ENCODE measurements at regions of chr4 and their contacts with region 1.

Region 1: DNA sequence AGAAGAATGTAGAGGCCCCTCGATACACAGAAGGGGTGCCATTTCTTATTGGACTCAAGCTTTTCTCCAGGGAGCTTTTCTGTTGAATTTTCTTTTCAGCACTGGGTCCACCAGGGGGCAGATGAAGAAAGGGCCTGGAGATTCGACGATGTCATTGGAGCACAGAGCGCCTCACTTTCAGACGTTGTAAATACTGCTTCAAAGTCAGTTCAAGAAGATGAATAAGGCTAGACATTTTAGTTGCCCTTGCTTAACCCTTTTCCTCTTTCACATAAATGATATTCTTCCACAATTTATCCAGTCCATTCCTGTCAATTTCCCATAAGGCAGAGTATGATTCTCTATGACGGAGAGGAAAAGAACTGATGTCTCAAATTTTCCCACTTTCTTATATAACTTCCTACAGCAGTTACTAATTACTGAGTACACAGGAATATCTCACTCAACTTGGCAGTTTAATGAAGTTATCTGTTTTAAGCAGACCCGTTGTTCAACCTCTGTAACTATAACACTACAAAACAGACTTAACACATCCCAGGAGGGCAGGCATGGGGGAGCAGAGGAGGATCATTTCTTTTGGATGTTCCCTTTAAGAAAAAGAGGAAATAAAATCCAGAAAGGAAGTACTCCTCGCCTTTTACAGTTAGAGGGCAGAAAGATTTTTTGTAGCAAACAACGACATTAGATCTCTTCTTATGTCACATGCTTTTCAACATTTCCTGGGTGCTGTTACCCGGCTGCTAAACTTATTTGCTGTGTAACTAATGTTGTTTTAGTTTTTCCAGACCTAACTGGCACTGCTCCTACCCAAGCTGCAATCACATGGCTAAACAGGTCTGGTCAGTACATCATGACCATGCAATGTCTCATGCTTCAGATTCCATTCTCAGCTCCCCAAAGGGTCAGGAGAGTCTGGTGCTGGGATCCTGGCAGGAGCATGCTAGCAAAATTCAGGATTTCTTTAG is 12.2 kb upstream of the CENPU start:
- DNase-seq: peak; percentile 40 to 92 (median 82)

Region 2: DNA sequence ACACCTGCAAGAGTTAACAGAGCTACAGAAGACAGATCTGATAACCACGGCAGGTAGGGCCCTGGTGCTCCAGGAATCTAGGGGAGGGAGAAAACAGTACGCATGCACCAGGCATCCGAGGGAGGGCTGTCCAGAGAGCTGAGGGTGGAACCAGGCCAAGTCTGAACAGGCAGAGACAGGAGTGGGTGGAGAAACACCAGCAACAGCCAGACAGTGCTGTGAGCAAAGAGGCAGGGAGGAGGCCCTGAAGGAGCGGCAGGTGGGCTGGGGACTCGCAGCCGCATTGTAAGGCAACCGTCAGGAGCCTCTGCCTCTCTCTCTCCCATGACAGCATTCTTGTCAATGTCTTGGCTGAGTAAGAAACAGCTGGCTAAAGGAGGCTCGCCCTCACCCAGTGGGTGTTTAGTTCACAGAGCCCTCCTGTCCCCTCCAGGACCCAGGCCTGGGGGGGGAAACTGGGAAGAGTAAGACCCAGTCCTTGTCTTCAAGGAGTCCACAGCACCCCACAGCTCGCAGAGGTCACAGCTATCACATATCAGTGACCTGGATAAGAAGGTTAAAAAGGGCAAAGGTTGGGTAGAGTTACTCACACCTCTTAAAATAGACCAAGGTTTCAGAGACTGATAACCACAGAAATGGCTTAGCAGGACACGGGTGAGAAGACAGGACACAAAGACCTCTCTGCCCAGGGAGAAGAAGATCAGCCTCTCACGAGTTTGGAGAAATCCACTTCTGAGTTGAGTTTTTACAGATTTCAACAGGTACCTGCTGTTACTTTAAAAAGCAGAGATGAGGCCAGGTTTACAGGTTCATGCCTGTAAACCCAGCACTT is 69.1 kb after region 1 on chr4:
- intact Hi-C with region 1: loop called (anchors 5 kb)
- DNase-seq: peak; percentile 45 to 85 (median 66)

Region 3: GRCh38 chr4:184988611-184989010 is 242.5 kb after region 1 on chr4:
- intact Hi-C with region 1: loop called (anchors 5 kb)
- DNase-seq: no peak

Region 4: DNA sequence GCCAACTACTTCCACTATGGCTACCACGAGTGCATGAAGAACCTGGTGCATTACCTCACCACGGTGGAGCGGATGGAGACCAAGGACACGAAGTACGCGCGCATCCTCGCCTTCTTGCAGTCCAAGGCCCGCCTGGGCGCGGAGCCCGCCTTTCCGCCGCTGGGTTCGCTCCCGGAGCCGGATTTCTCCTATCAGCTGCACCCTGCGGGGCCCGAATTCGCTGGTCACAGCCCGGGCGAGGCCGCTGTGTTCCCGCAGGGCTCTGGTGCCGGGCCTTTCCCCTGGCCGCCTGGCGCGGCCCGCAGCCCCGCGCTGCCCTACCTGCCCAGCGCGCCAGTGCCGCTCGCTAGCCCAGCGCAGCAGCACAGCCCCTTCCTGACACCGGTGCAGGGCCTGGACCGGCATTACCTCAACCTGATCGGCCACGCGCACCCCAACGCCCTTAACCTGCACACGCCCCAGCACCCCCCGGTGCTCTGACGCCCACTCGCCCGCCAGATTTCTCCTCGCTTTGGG is 274.2 kb after region 1 on chr4:
- intact Hi-C with region 1: no loop called
- DNase-seq: peak in 2 of 42 donors; percentile 22 to 30

Region 5: GRCh38 chr4:185504098-185505047 is 758.3 kb after region 1 on chr4:
- intact Hi-C with region 1: no loop called
- DNase-seq: no peak

Measured in head of caudate nucleus (tissue), 42 donors.